GM18951 (cell line): ENCODE measurements at regions of chr2 and their contacts with region 1.

Region 1: GRCh38 chr2:181715033-181715630 is 34.8 kb upstream of the NEUROD1 start:
- POLR2A ChIP-seq: no peak

Region 2: GRCh38 chr2:181077128-181077709 is 637.9 kb before region 1 on chr2:
- in situ Hi-C with region 1: loop called (anchors 10 kb)
- POLR2A ChIP-seq: no peak

Region 3: DNA sequence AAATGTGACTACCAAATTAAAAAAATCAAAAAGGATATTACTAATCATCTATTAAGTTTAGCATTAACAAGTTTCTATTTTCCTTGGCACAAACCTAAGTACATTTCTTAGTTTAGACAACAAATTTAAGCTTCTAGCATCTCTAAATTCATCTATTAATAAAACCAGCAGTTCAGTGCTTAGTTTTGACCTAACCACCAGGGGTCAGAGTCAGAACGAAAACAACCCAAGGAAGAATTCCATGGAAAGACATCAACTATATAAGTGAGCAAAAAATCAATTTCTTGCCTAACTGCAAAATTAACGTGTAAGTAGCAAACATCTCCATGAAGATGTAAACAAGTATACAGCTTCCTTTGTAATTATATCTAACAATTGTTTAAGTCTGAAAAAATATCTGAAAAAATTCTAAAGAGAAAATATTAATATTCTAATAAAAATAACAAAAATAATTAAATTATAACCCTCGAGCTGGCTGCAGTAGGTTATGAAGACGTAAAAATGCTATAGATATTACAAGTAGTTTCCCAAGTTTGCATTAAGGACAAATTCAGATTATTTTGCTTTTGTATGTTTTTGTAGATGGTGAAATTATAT is 141.9 kb before region 1 on chr2:
- in situ Hi-C with region 1: loop called (anchors 10 kb)
- POLR2A ChIP-seq: no peak

Region 4: GRCh38 chr2:182499706-182500470 is 784.8 kb after region 1 on chr2:
- in situ Hi-C with region 1: no loop called
- POLR2A ChIP-seq: no peak